Activated naive CD4-positive, alpha-beta T cell treated with anti-CD3 and anti-CD28 coated beads for 36 hours (primary cell): ENCODE measurements at regions of chr2 and their contacts with region 1.

Region 1: GRCh38 chr2:215680605-215681598 is 245.0 kb upstream of the FN1 start:
- DNase-seq: peak; percentile 60
- H3K4me3 Mint-ChIP-seq: peak overlapping the region; percentile 34
- H3K27ac Mint-ChIP-seq: peak overlapping the region; percentile 65
- H3K4me1 Mint-ChIP-seq: peaks cover 35% of the 10 kb centered on the region
- H3K27me3 Mint-ChIP-seq: no peaks in the 10 kb centered on the region

Region 2: DNA sequence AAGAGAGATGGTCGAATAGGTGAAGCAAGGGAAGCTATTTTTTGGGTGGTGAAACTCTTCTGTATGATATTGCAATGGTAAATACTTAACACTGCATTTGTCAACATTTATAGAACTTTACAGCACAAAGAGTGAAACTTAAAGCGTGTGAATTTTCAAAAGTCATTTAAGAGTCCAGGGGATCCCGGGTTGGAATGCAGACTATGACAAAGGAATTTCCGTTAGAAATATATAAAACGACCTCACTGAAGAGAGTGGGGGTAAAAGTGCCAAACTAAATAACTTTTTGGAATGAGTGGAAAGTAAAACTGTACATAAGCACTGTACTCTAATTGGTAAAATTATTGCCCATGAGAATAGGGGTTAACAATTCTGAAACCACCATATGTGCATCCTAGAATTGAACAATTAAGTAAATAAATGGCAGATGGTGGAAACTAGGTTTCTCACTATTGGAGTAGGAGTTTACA is 54.1 kb before region 1 on chr2:
- CTCF ChIA-PET with region 1: no interaction called
- intact Hi-C with region 1: no loop called
- DNase-seq: no peak
- H3K4me3 Mint-ChIP-seq: no peak overlapping the region
- H3K27ac Mint-ChIP-seq: no peak overlapping the region
- H3K4me1 Mint-ChIP-seq: no peaks in the 10 kb centered on the region
- H3K27me3 Mint-ChIP-seq: no peaks in the 10 kb centered on the region

Region 3: DNA sequence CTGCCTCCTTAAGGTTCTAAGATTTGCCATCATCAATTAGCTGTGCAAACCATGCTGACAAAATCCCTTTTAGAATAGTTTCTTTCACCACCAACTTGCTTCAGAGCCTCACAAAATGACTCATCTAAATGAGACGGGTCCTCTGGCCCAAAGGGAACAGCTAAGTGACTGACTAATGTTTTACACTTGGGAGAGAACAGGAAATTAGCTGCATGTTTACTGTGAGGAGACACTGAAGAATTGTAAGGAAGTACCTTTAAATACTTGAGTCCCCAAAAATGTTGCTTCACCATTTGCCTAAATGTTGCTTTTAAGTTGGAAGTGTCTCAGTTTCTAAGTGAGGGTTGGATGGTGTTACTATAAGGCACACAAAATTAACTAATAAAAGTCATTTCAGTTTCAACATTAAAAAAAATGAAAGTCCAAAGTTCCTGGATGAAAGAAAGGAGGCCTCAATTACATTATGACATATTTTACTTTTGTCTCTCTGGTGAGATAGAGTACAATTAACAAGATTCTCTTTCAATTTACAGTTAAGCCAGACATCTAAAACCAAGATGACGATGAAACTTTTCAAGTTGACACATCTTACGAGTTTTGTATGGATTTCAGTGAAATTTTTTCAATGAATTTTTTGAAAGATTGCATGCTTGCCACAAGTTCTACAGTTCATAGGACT is 15.9 kb before region 1 on chr2:
- CTCF ChIA-PET with region 1: no interaction called
- intact Hi-C with region 1: loop called (anchors 1 kb)
- DNase-seq: peak; percentile 39
- H3K4me3 Mint-ChIP-seq: no peak overlapping the region
- H3K27ac Mint-ChIP-seq: peak overlapping the region; percentile 66
- H3K4me1 Mint-ChIP-seq: peaks cover 18% of the 10 kb centered on the region
- H3K27me3 Mint-ChIP-seq: peaks cover 3% of the 10 kb centered on the region

Region 4: GRCh38 chr2:216002101-216002678 is 321.3 kb after region 1 on chr2:
- CTCF ChIA-PET with region 1: no interaction called
- intact Hi-C with region 1: no loop called
- DNase-seq: no peak
- H3K4me3 Mint-ChIP-seq: no peak overlapping the region
- H3K27ac Mint-ChIP-seq: no peak overlapping the region
- H3K4me1 Mint-ChIP-seq: peaks cover 40% of the 10 kb centered on the region
- H3K27me3 Mint-ChIP-seq: no peaks in the 10 kb centered on the region

Region 5: DNA sequence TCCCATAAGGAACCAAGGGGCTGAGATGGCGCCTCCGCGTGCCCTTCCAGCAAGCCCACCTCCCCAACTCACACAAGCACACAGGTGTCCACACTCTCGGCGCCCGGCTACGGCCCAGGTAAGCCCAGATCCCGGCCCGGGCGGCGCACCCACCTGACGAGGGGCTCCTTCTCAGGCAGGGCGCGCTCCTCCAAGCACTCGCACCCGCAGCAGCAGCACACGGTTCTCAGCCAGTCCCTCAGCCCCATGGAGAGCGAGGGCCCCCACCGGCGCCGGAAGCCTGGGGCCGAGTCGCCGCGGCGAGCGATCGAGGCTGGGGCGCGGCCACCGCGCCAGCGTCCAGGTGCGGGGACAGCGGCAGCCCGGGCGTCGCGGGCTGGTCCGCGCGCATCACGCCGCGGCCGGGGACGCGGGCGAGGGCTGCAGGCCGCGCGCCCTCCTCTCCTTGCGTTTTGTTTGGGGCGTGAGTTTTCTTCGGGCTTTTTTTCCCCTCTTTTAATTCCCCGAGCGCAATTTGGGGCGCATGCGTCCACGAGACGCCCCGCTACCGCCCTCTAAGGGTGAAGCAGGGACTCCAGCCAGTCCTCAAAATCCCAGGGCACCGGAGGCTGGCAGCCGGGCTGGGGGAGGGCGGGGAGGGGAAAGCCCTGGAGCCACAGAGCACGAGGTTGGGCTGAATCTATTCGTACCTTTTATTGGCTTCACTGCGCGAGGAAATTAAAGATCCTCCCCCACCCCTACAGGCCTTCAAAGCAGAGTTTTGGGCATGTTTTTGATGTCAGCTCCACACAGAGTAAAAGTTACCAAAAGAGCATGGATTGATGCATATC is 332.4 kb after region 1 on chr2 and contains the start of gene MREG:
- CTCF ChIA-PET with region 1: no interaction called
- intact Hi-C with region 1: loop called (anchors 10 kb)
- DNase-seq: peak; percentile 91
- H3K4me3 Mint-ChIP-seq: peak within 1 kb of the TSS; percentile 81
- H3K27ac Mint-ChIP-seq: no peak within 1 kb of the TSS
- H3K4me1 Mint-ChIP-seq: peaks cover 51% of the 10 kb centered on the region
- H3K27me3 Mint-ChIP-seq: no peaks in the 10 kb centered on the region
- total RNA-seq, gene MREG: 3.1 to 3.9 TPM